ENCODE measurements at regions of chr14 and their contacts with region 1.

Region 1: DNA sequence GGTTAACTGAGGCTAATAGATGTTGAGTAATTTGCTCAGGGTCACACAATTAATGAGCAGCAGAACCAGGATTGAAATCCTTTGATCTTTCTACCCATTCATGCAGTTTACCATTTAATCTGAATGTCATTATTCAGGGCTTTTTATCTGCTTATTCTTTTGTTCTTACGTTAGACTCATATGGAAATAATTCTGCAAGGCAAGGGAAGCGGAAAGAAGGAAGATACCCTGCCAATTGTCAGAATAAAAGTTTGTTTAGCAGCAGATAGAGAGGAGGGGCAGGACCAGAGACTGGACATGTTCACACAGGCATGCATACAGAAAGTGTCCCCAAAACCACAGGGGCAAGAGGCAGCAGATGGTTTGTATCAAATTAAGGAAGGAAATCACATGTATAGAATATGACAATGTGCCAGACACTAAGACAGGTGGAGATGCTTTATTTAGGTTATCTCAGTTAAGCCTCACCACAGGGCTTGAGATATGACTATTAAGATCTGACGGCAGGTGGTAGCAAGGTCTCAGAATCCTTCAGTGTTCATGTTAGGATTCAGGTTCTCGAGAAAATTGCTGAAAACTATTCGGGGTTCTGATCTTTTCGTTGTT is 29.8 kb downstream of the BRMS1L start:
- DNase-seq: no peak
- ATAC-seq: no peak
- H3K4me3 ChIP-seq: no peak overlapping the region
- H3K4me3 Mint-ChIP-seq: no peak overlapping the region
- H3K27ac ChIP-seq: no peak overlapping the region
- H3K27ac Mint-ChIP-seq: no peak overlapping the region
- H3K4me1 ChIP-seq: no peaks in the 10 kb centered on the region
- H3K4me1 Mint-ChIP-seq: no peaks in the 10 kb centered on the region
- H3K27me3 ChIP-seq: no peaks in the 10 kb centered on the region
- H3K27me3 Mint-ChIP-seq: no peaks in the 10 kb centered on the region

Region 2: DNA sequence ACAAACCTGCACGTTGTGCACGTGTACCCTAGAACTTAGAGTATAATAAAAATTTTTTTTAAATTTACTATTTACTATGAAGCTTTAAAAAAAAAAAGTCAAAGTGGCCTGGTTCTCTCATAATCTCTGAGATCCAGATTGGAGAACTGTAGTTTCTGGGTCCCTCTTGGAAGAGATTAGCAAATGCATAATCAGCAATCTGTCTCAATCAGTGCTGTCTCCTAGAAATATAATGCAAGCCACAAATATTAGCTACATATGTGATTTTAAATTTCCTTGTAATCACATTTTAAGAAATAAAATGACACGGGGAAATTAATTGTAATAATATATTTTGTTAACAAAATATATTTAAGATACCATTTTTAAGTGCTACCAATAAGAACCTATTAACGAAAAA is 79.2 kb before region 1 on chr14:
- CTCF ChIA-PET with region 1: no interaction called
- POLR2A ChIA-PET with region 1: interaction called in 1 of 2 experiments, 10 read pairs
- DNase-seq: no peak
- ATAC-seq: no peak
- H3K4me3 ChIP-seq: no peak overlapping the region
- H3K4me3 Mint-ChIP-seq: no peak overlapping the region
- H3K27ac ChIP-seq: no peak overlapping the region
- H3K27ac Mint-ChIP-seq: no peak overlapping the region
- H3K4me1 ChIP-seq: no peaks in the 10 kb centered on the region
- H3K4me1 Mint-ChIP-seq: peaks cover 6 to 13% (median 8%) of the 10 kb centered on the region in 3 donors
- H3K27me3 ChIP-seq: no peaks in the 10 kb centered on the region
- H3K27me3 Mint-ChIP-seq: no peaks in the 10 kb centered on the region

Measured in T-cell (primary cell).